HCT116 (cell line): ENCODE measurements at regions of chr9 and their contacts with region 1.

Region 1: DNA sequence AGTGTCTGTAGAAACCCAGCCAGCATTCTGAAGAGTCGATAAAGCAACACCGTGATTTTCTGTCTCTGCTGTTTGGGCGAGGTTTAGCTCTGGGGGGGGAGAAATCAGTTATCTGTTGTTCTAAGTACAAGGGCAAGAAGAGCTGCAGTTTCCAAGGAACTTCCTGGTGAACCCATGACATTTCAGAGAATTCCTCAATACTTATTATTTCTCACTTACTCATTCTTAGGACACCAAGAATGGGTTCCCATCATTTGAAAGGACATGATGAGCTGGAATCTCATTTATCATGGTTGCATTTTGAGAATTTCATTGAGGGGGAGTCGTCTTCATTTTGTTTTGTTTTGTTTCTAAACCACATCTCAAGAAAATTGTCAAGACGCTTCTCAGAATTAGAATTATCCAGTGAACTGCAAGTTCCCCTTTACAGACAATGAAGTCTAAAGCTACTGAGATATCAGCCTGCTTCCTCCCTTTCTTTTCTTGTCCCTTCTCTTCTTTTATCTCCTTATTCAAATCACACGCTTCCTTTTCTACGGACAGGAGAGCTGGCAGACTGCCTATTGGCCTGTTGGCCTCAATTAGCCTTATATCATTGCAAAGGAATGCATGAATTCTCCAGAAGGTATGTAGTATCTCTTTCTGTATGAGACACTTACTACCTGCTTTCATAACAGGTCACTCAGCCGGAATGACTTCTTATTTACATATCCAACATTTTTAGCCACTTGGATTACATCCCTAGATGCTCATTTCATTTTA is 53.7 kb downstream of the ZNF462 start:
- DNase-seq: peak; percentile 80
- ATAC-seq: peak; percentile 71
- H3K4me3 ChIP-seq: peak overlapping the region in 1 of 2 experiments; percentile 15; a peak in 2 of 4 replicates
- H3K27ac ChIP-seq: peak overlapping the region; percentile 49; the same call in 1 of the 2 replicates
- H3K4me1 ChIP-seq: peaks cover 29 to 62% of the 10 kb centered on the region in 2 experiments
- H3K27me3 ChIP-seq: no peaks in the 10 kb centered on the region
- CTCF ChIP-seq: no peak
- POLR2A ChIP-seq: no peak
- RAD21 ChIP-seq: no peak

Region 2: DNA sequence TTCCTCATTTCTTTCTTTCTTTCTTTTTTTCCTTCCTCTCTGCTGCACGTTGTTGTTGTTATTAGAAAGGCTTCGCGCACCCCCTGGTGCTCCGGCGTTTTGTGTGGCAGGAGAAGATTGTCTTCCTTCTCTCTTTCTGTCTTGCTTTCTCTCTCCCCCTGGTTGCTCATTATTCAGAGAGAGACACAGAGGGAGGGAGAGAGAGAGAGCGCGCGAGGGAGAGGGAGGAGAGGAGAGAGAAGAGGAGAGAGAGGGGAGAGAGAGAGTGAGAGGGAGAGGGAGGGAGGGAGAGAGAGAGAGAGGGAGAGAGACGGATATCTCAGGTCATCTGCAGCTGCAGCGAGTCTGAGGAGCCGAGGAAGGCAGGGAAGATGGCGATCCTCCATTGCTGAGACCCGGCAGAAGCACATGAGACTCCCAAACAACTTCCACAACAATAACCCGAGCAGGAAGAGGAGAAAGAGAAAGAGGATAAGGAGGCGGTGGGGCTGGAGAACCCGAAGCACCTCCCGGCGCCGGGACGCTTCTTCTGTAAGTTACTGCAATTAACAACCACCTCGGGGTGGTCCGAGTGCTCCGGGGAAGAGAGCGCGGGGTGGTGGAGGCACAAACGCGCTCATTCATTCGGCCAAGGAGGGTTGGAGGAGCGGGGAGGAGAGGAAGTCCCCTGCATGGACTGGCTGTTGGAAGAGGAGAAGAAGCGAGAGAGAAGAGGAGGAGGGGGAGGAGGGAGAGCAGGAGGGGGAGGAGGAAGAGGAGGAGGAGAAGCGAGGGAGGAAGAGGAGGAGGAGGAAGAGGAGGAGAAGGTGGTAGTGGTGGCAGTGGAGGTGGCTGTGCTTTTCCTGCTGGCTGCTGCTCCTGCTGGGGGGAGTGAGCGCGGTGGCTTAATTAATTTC is 53.6 kb before region 1 on chr9 and contains the start of gene ZNF462:
- CTCF ChIA-PET with region 1: no interaction called
- POLR2A ChIA-PET with region 1: no interaction called
- RAD21 ChIA-PET with region 1: interaction called in 1 of 2 experiments, 4 read pairs
- intact Hi-C with region 1: loop called (anchors 5 kb)
- DNase-seq: no peak
- ATAC-seq: peak; percentile 21
- H3K4me3 ChIP-seq: peak within 1 kb of the TSS; percentile 49 to 56
- H3K27ac ChIP-seq: peak within 1 kb of the TSS; percentile 29
- H3K4me1 ChIP-seq: peaks cover 5 to 16% of the 10 kb centered on the region in 2 experiments; a peak in 3 of 4 replicates
- H3K27me3 ChIP-seq: no peaks in the 10 kb centered on the region
- CTCF ChIP-seq: 0 out of 6 replicates have a peak, but pooled peaks of 1 of the 3 experiments have one; percentile 4
- POLR2A ChIP-seq: no peak
- RAD21 ChIP-seq: peak; percentile 28; the same call in 1 of the 2 replicates
- total RNA-seq, gene ZNF462: 18.1 TPM

Region 3: DNA sequence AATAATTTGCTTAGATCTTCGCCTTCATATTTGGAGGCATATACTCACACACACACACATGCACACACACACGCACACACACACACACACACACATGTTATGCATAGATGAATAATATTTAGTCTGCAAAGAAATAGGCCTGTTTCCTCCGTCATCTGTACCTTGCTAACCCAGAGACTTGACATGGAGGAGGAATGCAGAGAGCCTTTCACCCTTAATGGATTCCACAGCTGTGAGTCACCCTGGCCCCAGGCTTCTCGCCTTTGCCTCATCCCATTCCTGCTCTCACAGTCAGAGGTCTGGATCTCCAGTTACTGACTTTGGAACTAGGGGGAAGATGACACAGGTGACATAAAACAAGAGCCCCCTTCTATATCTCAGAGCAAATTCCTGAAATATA is 24.0 kb before region 1 on chr9:
- CTCF ChIA-PET with region 1: no interaction called
- POLR2A ChIA-PET with region 1: no interaction called
- RAD21 ChIA-PET with region 1: no interaction called
- intact Hi-C with region 1: no loop called
- DNase-seq: peak; percentile 89
- ATAC-seq: peak; percentile 99
- H3K4me3 ChIP-seq: peak overlapping the region in 1 of 2 experiments; percentile 20; a peak in 2 of 4 replicates
- H3K27ac ChIP-seq: peak overlapping the region; percentile 68; the same call in 1 of the 2 replicates
- H3K4me1 ChIP-seq: peaks cover 20 to 38% of the 10 kb centered on the region in 2 experiments
- H3K27me3 ChIP-seq: no peaks in the 10 kb centered on the region
- CTCF ChIP-seq: no peak
- POLR2A ChIP-seq: no peak
- RAD21 ChIP-seq: peak; percentile 17; the same call in 1 of the 2 replicates